ENCODE measurements at regions of chr2 and their contacts with region 1.

Region 1: GRCh38 chr2:32063310-32064161 is at the start of gene SPAST:
- DNase-seq: peak; percentile 96 to 97 (median 97)
- H3K4me3 ChIP-seq: peak within 1 kb of the TSS; percentile 93 to 94
- H3K4me3 Mint-ChIP-seq: peak within 1 kb of the TSS; percentile 98 to 99 (median 99)
- H3K27ac ChIP-seq: peak within 1 kb of the TSS; percentile 77
- H3K27ac Mint-ChIP-seq: peak within 1 kb of the TSS; percentile 89 to 98 (median 97)
- H3K4me1 ChIP-seq: peaks cover 41% of the 10 kb centered on the region
- H3K4me1 Mint-ChIP-seq: peaks cover 11 to 43% (median 31%) of the 10 kb centered on the region in 4 donors
- H3K27me3 ChIP-seq: no peaks in the 10 kb centered on the region
- H3K27me3 Mint-ChIP-seq: no peaks in the 10 kb centered on the region
- total RNA-seq, gene SPAST: 22.5 to 23.2 TPM

Region 2: DNA sequence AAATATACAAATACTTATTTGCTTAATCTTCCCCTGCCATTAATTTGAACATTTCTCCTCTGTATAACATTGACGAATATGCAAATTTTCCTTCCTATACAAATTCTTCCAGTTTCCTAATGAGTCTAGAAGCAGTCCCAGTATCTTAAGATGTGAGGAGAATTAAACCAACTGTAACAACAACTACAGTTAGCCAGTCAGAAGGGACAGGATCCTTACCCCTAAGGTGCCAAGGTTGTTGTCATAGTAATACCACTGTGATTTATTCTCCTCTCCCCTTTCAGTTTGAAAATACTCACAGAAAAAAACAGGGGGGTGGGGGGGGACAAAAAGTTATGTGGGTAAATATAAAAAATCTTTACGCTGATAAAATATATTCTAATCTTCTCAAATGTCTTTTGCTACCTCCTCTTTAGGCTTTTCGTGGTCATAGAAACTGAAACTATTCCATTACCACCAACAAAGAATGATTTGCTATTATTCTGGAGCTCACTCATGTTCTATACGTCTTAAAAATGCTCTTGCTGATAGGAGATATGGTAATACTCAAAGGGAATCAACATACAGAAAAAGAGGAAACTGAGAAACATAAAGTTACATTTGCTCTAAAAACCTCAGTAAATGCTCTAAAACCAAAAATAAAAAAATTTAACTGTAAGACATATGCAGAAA is 160.3 kb before region 1 on chr2:
- CTCF ChIA-PET with region 1: no interaction called
- POLR2A ChIA-PET with region 1: no interaction called
- intact Hi-C with region 1: loop called (anchors 10 kb)
- DNase-seq: no peak
- H3K4me3 ChIP-seq: no peak overlapping the region
- H3K4me3 Mint-ChIP-seq: peak overlapping the region in 1 of 8 donors; percentile 2
- H3K27ac ChIP-seq: no peak overlapping the region
- H3K27ac Mint-ChIP-seq: peak overlapping the region in 4 of 7 donors; percentile 2 to 74 (median 49)
- H3K4me1 ChIP-seq: peaks cover 11% of the 10 kb centered on the region
- H3K4me1 Mint-ChIP-seq: peaks cover 7 to 13% (median 11%) of the 10 kb centered on the region in 4 donors
- H3K27me3 ChIP-seq: no peaks in the 10 kb centered on the region
- H3K27me3 Mint-ChIP-seq: no peaks in the 10 kb centered on the region

Region 3: GRCh38 chr2:32039447-32040219 is 23.9 kb before region 1 on chr2 and contains the start of gene DPY30:
- CTCF ChIA-PET with region 1: interaction called, 35 read pairs
- POLR2A ChIA-PET with region 1: interaction called, 75 read pairs
- intact Hi-C with region 1: loop called (anchors 1 kb)
- DNase-seq: peak; percentile 90 to 91 (median 90)
- H3K4me3 ChIP-seq: peak within 1 kb of the TSS; percentile 77 to 98
- H3K4me3 Mint-ChIP-seq: peak within 1 kb of the TSS; percentile 88 to 99 (median 92)
- H3K27ac ChIP-seq: peak within 1 kb of the TSS; percentile 63
- H3K27ac Mint-ChIP-seq: peak within 1 kb of the TSS; percentile 92 to 98 (median 97)
- H3K4me1 ChIP-seq: peaks cover 13% of the 10 kb centered on the region
- H3K4me1 Mint-ChIP-seq: peaks cover 12 to 26% (median 18%) of the 10 kb centered on the region in 4 donors
- H3K27me3 ChIP-seq: no peaks in the 10 kb centered on the region
- H3K27me3 Mint-ChIP-seq: peaks cover 0 to 2% of the 10 kb centered on the region in 2 donors
- total RNA-seq, gene DPY30: 50.0 to 51.3 TPM

Region 4: GRCh38 chr2:32168513-32168912 is 105.0 kb after region 1 on chr2:
- CTCF ChIA-PET with region 1: interaction called, 3 read pairs
- POLR2A ChIA-PET with region 1: interaction called, 26 read pairs
- intact Hi-C with region 1: loop called (anchors 1 kb)
- DNase-seq: no peak
- H3K4me3 ChIP-seq: no peak overlapping the region
- H3K4me3 Mint-ChIP-seq: peak overlapping the region in 1 of 8 donors; percentile 33
- H3K27ac ChIP-seq: no peak overlapping the region
- H3K27ac Mint-ChIP-seq: peak overlapping the region in 1 of 7 donors; percentile 38
- H3K4me1 ChIP-seq: peaks cover 23% of the 10 kb centered on the region
- H3K4me1 Mint-ChIP-seq: peaks cover 30 to 56% (median 46%) of the 10 kb centered on the region in 4 donors
- H3K27me3 ChIP-seq: no peaks in the 10 kb centered on the region
- H3K27me3 Mint-ChIP-seq: no peaks in the 10 kb centered on the region

Region 5: DNA sequence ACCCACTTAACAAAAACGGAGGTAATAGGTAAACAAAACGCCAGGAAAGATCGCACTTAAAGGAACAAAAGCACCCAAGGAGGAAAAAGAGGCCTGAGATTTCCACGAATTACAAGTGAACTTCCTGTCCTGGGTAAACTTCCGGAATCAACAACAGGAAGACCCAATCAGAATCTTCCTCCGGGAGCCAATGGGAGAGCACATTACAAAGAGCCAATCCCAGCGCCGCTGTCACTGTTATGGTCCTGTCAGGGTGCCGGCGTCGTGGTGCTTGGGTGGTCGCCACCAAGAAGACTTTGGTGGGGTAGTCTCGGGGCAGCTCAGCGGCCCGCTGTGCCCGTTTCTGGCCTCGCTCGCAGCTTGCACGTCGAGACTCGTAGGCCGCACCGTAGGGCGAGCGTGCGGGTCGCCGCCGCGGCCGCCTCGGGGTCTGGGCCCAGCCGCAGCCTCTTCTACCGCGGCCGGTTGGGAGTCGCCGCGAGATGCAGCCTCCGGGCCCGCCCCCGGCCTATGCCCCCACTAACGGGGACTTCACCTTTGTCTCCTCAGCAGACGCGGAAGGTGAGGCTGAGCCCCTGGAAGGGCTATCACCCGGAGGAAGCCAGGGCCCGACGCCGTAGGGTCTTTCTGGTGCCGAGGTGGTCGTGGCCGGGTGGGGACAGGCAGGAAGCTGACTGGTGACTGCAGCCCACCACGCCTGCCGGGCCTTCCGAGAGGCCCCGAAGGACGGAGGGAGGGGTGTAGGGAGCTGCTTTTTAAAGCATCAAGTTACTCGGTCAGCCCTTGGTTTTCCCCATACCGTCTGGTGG is 214.3 kb after region 1 on chr2 and contains the start of gene YIPF4:
- CTCF ChIA-PET with region 1: no interaction called
- POLR2A ChIA-PET with region 1: interaction called, 6 read pairs
- intact Hi-C with region 1: loop called (anchors 1 kb)
- DNase-seq: peak; percentile 88 to 92 (median 90)
- H3K4me3 ChIP-seq: peak within 1 kb of the TSS; percentile 90 to 98
- H3K4me3 Mint-ChIP-seq: peak within 1 kb of the TSS; percentile 90 to 97 (median 96)
- H3K27ac ChIP-seq: peak within 1 kb of the TSS; percentile 72
- H3K27ac Mint-ChIP-seq: peak within 1 kb of the TSS; percentile 96 to 99 (median 97)
- H3K4me1 ChIP-seq: peaks cover 43% of the 10 kb centered on the region
- H3K4me1 Mint-ChIP-seq: peaks cover 11 to 45% (median 32%) of the 10 kb centered on the region in 4 donors
- H3K27me3 ChIP-seq: no peaks in the 10 kb centered on the region
- H3K27me3 Mint-ChIP-seq: peaks cover 0 to 1% of the 10 kb centered on the region in 2 donors
- total RNA-seq, gene YIPF4: 46.1 to 51.9 TPM

Measured in CD4-positive, alpha-beta memory T cell (primary cell).